Heart left ventricle (tissue), 16 donors: ENCODE measurements at regions of chrX and their contacts with region 1.

Region 1: GRCh38 chrX:132615391-132616131 is 126.7 kb upstream of the MBNL3 start:
- DNase-seq: peak in 3 of 5 donors; percentile 8 to 40 (median 19)
- ATAC-seq: no peak
- H3K4me3 ChIP-seq: no peak overlapping the region
- H3K27ac ChIP-seq: no peak overlapping the region
- H3K4me1 ChIP-seq: no peaks in the 10 kb centered on the region
- H3K27me3 ChIP-seq: peaks cover 0 to 32% (median 0%) of the 10 kb centered on the region in 9 donors
- CTCF ChIP-seq: peak; percentile 5 to 48 (median 34)
- POLR2A ChIP-seq: no peak

Region 2: GRCh38 chrX:131854581-131854980 is 761.0 kb before region 1 on chrX:
- intact Hi-C with region 1: loop called in 4 of 10 experiments (anchors 10 kb)
- DNase-seq: no peak
- ATAC-seq: no peak
- H3K4me3 ChIP-seq: no peak overlapping the region
- H3K27ac ChIP-seq: no peak overlapping the region
- H3K4me1 ChIP-seq: no peaks in the 10 kb centered on the region
- H3K27me3 ChIP-seq: peaks cover 0 to 41% (median 0%) of the 10 kb centered on the region in 9 donors
- CTCF ChIP-seq: no peak
- POLR2A ChIP-seq: no peak

Region 3: DNA sequence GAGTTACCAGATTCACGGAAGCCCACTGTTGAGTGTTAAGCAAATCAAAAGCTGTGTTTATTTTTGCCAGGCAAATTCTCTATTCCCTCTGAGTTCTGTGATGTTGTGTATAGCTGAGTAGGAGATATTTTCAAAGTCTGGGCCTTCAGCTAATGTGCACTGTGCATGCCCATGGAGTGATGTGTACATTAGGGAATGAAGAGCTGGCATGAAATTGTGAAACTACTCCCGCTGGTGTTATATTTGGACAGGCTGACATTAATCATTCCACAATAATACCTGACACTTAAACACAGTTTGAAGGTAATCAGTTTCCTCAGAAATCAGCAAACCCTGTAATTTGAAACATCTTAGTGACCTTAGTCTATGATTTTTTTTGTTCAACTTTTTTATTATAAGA is 38.6 kb before region 1 on chrX:
- intact Hi-C with region 1: no loop called
- DNase-seq: no peak
- ATAC-seq: no peak
- H3K4me3 ChIP-seq: no peak overlapping the region
- H3K27ac ChIP-seq: no peak overlapping the region
- H3K4me1 ChIP-seq: no peaks in the 10 kb centered on the region
- H3K27me3 ChIP-seq: peaks cover 0 to 49% (median 0%) of the 10 kb centered on the region in 9 donors
- CTCF ChIP-seq: no peak
- POLR2A ChIP-seq: no peak

Region 4: GRCh38 chrX:132631579-132632232 is 16.1 kb after region 1 on chrX:
- intact Hi-C with region 1: no loop called
- DNase-seq: no peak
- ATAC-seq: peak in 2 of 4 donors; percentile 49 to 58
- H3K4me3 ChIP-seq: no peak overlapping the region
- H3K27ac ChIP-seq: no peak overlapping the region
- H3K4me1 ChIP-seq: no peaks in the 10 kb centered on the region
- H3K27me3 ChIP-seq: peaks cover 0 to 7% (median 0%) of the 10 kb centered on the region in 9 donors
- CTCF ChIP-seq: peak in 11 of 12 donors; percentile 26 to 55 (median 46)
- POLR2A ChIP-seq: no peak

Region 5: GRCh38 chrX:132795181-132795580 is 179.6 kb after region 1 on chrX:
- intact Hi-C with region 1: no loop called
- DNase-seq: no peak
- ATAC-seq: no peak
- H3K4me3 ChIP-seq: no peak overlapping the region
- H3K27ac ChIP-seq: no peak overlapping the region
- H3K4me1 ChIP-seq: no peaks in the 10 kb centered on the region
- H3K27me3 ChIP-seq: peaks cover 0 to 29% (median 0%) of the 10 kb centered on the region in 9 donors
- CTCF ChIP-seq: no peak
- POLR2A ChIP-seq: no peak